Gastrocnemius medialis (tissue), 4 donors: ENCODE measurements at regions of chr2 and their contacts with region 1.

Region 1: DNA sequence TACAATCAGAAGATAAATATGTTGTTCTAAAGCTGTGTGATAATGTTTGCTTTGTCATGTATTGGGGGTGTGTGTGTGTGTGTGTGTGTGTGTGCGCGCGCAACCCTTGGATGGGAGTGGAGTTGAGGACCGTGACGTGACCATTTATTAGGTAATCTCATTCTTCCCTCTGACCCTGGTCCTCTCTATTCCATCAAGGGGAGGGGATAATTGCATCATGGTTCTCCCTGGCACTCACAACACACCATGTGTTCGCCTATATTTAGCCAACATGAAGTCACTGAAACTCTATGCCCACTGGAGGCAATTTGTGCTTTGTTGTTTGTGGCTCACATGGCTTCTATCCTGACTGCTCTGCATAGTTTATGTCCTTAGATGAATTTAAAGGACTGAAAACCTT is 79.8 kb upstream of the LRPPRC start:
- DNase-seq: peak; percentile 75 to 93
- ATAC-seq: peak; percentile 98 to 99
- H3K4me3 ChIP-seq: no peak overlapping the region
- H3K27ac ChIP-seq: peak overlapping the region; percentile 86 to 95 (median 90)
- H3K4me1 ChIP-seq: peaks cover 13 to 19% of the 10 kb centered on the region in 2 donors
- H3K27me3 ChIP-seq: no peaks in the 10 kb centered on the region
- CTCF ChIP-seq: no peak
- POLR2A ChIP-seq: peak in 1 of 2 donors; percentile 25

Region 2: DNA sequence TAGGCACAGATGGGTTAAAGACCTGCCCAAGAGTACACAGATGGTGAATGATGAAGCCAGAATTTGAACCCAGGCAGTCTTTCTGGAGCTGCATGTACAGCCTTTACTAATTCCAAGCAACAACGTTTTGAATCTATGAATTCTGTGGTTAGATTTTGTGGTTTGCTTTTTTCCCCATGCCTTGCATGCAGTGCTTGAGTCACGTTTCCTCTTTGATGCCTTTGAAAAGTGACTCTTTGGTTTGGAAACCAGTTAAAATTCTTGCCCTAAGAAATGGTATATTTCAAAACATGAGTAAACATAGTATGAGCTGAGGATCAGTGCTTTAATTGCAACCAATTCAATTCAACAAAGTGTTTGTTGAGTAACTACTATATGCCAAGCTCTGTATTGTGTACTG is 44.9 kb after region 1 on chr2:
- in situ Hi-C with region 1: no loop called
- intact Hi-C with region 1: loop called (anchors 2 kb)
- DNase-seq: no peak
- ATAC-seq: no peak
- H3K4me3 ChIP-seq: no peak overlapping the region
- H3K27ac ChIP-seq: no peak overlapping the region
- H3K4me1 ChIP-seq: peaks cover 0 to 2% of the 10 kb centered on the region in 2 donors
- H3K27me3 ChIP-seq: no peaks in the 10 kb centered on the region
- CTCF ChIP-seq: no peak
- POLR2A ChIP-seq: no peak